ENCODE measurements at regions of chr10 and their contacts with region 1.

Region 1: DNA sequence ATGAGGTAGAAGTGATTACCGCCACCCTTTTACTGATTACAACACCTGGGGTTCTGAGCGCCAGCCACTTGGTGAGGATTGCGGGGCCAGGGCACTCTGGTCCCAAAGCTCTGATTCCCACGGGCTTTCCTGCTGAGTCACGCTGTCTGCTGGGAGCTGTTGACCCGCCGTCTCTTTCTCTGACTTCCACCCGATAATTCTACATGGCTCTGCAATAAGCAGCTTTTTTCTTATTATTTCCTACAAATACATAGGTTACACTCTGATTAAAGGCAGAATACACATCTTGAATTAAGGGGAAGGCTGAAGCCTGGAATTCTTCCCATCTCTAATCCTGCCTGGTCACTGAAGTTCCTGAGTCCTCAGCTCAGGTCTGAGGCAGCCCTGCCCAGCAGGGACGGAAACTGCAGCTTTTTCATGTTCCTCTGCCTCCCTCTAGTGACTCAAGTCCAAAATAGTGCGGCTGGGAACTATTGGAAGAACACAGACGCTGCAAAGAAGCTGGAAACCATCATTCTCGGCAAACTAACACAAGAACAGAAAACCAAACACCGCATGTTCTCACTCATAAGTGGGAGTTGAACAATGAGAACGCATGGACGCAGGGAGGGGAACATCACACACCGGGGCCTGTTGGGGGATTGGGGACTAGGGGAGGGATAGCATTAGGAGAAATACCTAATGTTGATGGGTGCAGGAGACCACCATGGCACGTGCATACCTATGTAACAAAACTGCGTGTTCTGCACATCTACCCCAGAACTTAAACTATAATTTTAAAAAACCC is 178.3 kb downstream of the PRKCQ start:
- DNase-seq: peak; percentile 73 to 80 (median 79)
- ATAC-seq: peak; percentile 93 to 98 (median 96)
- H3K4me3 ChIP-seq: peak overlapping the region in 11 of 12 donors; percentile 4 to 49 (median 41)
- H3K27ac ChIP-seq: peak overlapping the region in 4 of 12 donors; percentile 2 to 76 (median 40)
- H3K4me1 ChIP-seq: peaks cover 0 to 46% (median 4%) of the 10 kb centered on the region in 12 donors
- H3K27me3 ChIP-seq: peaks cover 0 to 4% (median 0%) of the 10 kb centered on the region in 9 donors
- CTCF ChIP-seq: peak; percentile 62 to 89 (median 76)
- POLR2A ChIP-seq: no peak

Region 2: DNA sequence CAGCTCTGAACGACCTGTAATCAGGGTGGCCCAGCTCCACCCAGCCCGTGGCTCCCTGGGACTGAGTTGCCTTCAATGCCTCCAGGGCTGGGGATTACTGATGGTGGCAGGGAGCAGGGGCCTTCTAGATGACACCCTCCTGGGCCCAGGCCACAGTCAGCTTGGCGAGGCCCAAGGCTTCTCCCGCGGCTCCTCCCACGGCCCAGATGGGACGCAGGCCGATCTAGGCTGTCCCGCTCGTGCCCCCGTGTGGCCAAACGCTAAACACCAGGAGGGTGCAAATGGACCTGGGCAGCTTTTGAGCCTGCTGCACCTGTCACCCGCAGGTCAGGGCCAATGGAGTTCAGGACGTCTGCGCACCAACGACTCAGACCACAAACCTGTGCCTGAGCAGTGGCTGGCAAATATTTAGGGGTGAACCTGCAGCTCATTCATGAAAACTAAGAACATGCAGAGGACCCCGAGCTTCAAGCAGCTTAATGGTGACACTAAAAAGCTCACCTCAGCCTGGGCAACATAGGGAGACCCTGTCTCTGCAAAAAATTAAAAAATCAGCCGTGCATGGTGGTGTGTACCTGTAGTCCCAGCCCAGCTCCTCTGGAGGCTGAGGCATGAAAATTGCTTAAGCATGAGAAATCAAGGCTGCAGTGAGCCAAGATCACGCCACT is 778.5 kb before region 1 on chr10:
- intact Hi-C with region 1: loop called in 1 of 10 experiments (anchors 10 kb)
- DNase-seq: peak; percentile 86 to 94 (median 90)
- ATAC-seq: peak; percentile 87 to 96 (median 91)
- H3K4me3 ChIP-seq: no peak overlapping the region
- H3K27ac ChIP-seq: peak overlapping the region in 2 of 12 donors; percentile 11 to 24
- H3K4me1 ChIP-seq: peaks cover 0 to 26% (median 5%) of the 10 kb centered on the region in 12 donors
- H3K27me3 ChIP-seq: no peaks in the 10 kb centered on the region
- CTCF ChIP-seq: peak; percentile 84 to 94 (median 91)
- POLR2A ChIP-seq: no peak

Region 3: DNA sequence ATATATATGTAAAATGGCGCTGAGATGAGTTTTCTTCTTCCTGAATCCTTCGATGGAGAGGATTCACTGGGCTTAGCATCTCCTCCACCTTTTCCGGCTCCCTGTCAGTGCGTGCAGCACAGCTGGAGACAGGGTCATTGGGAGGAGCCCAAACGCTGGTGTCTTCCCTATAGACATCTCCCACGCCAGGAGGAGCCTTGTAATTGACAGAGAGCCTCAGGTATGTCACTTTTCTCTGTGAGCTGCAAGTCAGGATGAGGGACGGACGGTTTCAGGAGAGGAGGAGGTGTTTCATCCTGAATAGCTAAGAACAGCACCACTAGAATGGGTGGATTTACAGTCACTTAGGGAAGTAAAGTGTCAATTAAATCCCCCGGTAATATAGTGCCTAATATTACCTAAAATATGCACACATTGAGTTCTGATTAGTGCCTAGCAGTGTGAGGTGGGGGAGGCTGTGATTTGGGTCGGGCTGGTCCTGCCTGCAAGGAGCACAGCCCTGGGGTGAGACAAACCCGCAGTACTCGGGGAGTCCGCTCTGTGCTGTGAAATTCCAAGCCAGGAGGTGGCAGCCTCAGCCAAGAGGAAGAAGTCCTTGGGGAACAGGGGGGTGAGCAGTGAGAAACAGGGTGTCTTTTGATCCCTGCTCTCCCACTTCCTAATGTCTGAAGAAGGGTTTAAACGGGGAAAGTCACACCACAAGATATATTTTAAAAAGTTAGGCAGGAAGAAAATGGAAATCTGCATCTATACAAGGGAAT is 452.6 kb before region 1 on chr10:
- intact Hi-C with region 1: loop called in 1 of 10 experiments (anchors 2 kb)
- DNase-seq: peak; percentile 60 to 79 (median 68)
- ATAC-seq: peak in 3 of 4 donors; percentile 28 to 50 (median 42)
- H3K4me3 ChIP-seq: no peak overlapping the region
- H3K27ac ChIP-seq: no peak overlapping the region
- H3K4me1 ChIP-seq: peaks cover 0 to 55% (median 30%) of the 10 kb centered on the region in 12 donors
- H3K27me3 ChIP-seq: no peaks in the 10 kb centered on the region
- CTCF ChIP-seq: peak; percentile 7 to 65 (median 40)
- POLR2A ChIP-seq: no peak

Region 4: DNA sequence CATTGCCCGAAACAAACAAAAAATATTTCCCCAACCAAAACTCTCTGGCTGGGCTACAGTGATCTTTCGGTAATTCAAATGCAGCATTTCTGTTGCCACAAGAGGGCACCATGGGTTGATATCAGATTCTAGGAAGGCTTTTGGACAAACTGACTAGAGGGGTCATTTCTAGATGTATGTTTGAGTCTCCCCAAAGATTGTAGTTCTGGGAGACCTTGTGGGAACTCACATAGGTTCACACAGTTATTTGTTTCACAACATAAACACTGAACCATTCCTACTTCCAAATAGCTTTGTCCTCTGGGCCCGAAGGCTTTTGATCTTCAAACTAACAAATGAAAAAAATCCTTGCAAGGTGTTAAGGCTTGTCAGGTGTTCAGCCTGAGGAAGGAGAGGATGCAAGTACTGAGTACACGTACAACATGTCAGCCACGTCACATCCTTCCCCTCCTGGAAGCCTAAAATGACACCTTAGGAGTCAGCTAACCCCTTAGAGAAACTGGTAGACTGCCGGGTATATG is 387.5 kb before region 1 on chr10:
- intact Hi-C with region 1: loop called (anchors 2 to 10 kb)
- DNase-seq: peak in 2 of 5 donors; percentile 44 to 58
- ATAC-seq: peak in 3 of 4 donors; percentile 20 to 64 (median 50)
- H3K4me3 ChIP-seq: no peak overlapping the region
- H3K27ac ChIP-seq: peak overlapping the region in 2 of 12 donors; percentile 1 to 2
- H3K4me1 ChIP-seq: peaks cover 0 to 16% (median 5%) of the 10 kb centered on the region in 12 donors
- H3K27me3 ChIP-seq: no peaks in the 10 kb centered on the region
- CTCF ChIP-seq: peak; percentile 71 to 86 (median 75)
- POLR2A ChIP-seq: no peak

Region 5: GRCh38 chr10:6108603-6109443 is 292.9 kb before region 1 on chr10:
- intact Hi-C with region 1: loop called (anchors 1 to 5 kb)
- DNase-seq: no peak
- ATAC-seq: peak in 2 of 4 donors; percentile 29 to 45
- H3K4me3 ChIP-seq: no peak overlapping the region
- H3K27ac ChIP-seq: no peak overlapping the region
- H3K4me1 ChIP-seq: peaks cover 0 to 24% (median 0%) of the 10 kb centered on the region in 12 donors
- H3K27me3 ChIP-seq: no peaks in the 10 kb centered on the region
- CTCF ChIP-seq: peak; percentile 58 to 81 (median 74)
- POLR2A ChIP-seq: no peak

Region 6: GRCh38 chr10:6114805-6115341 is 286.9 kb before region 1 on chr10:
- intact Hi-C with region 1: loop called in 1 of 10 experiments (anchors 5 kb)
- DNase-seq: peak in 1 of 5 donors; percentile 48
- ATAC-seq: peak; percentile 40 to 62 (median 50)
- H3K4me3 ChIP-seq: no peak overlapping the region
- H3K27ac ChIP-seq: peak overlapping the region in 11 of 12 donors; percentile 17 to 71 (median 57)
- H3K4me1 ChIP-seq: peaks cover 0 to 42% (median 13%) of the 10 kb centered on the region in 12 donors
- H3K27me3 ChIP-seq: no peaks in the 10 kb centered on the region
- CTCF ChIP-seq: peak in 1 of 12 donors; percentile 5
- POLR2A ChIP-seq: no peak

Region 7: GRCh38 chr10:6202684-6203330 is 198.9 kb before region 1 on chr10 and contains the start of gene PFKFB3:
- intact Hi-C with region 1: loop called (anchors 1 to 2 kb)
- DNase-seq: peak; percentile 96 to 99 (median 97)
- ATAC-seq: peak; percentile 95
- H3K4me3 ChIP-seq: peak within 1 kb of the TSS; percentile 66 to 89 (median 78)
- H3K27ac ChIP-seq: peak within 1 kb of the TSS; percentile 61 to 99 (median 94)
- H3K4me1 ChIP-seq: peaks cover 0 to 59% (median 30%) of the 10 kb centered on the region in 12 donors
- H3K27me3 ChIP-seq: no peaks in the 10 kb centered on the region
- CTCF ChIP-seq: peak in 11 of 12 donors; percentile 96 to 99 (median 98)
- POLR2A ChIP-seq: peak; percentile 89 to 99
- total RNA-seq, gene PFKFB3: 8.4 to 53.1 (median 15.1) TPM

Region 8: GRCh38 chr10:6473901-6474370 is 72.2 kb after region 1 on chr10:
- intact Hi-C with region 1: no loop called
- DNase-seq: no peak
- ATAC-seq: no peak
- H3K4me3 ChIP-seq: peak overlapping the region in 1 of 12 donors; percentile 27
- H3K27ac ChIP-seq: peak overlapping the region in 1 of 12 donors; percentile 85
- H3K4me1 ChIP-seq: peaks cover 0 to 26% (median 0%) of the 10 kb centered on the region in 12 donors
- H3K27me3 ChIP-seq: peaks cover 0 to 7% (median 0%) of the 10 kb centered on the region in 9 donors
- CTCF ChIP-seq: no peak
- POLR2A ChIP-seq: no peak

Region 9: DNA sequence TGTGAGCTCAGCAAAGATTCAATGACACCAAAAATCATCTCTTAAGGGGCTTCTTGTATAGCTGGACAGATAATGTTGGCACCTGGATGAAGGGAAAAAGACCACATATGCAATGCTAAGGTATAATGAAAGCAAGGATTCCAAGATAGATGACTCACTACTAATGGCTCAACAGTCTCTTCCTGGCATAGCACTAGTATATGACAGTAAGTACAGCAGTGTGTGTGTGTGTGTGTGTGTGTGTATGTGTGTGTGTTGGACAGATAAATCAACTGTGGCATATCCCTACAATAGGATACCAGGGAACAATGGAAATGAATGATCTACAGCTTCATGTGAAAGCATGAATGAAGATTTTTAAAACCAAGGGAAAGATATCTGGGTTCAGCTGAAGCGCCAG is 752.0 kb after region 1 on chr10:
- intact Hi-C with region 1: no loop called
- DNase-seq: no peak
- ATAC-seq: no peak
- H3K4me3 ChIP-seq: no peak overlapping the region
- H3K27ac ChIP-seq: no peak overlapping the region
- H3K4me1 ChIP-seq: peaks cover 0 to 15% (median 0%) of the 10 kb centered on the region in 12 donors
- H3K27me3 ChIP-seq: peaks cover 0 to 3% (median 0%) of the 10 kb centered on the region in 9 donors
- CTCF ChIP-seq: no peak
- POLR2A ChIP-seq: no peak